Activated CD4-positive, alpha-beta T cell treated with anti-CD3 and anti-CD28 coated beads, Interleukin-2, amount 10 ng/mL, durations not matched to agents 24 days and 14 days (primary cell): ENCODE measurements at regions of chr7 and their contacts with region 1.

Region 1: DNA sequence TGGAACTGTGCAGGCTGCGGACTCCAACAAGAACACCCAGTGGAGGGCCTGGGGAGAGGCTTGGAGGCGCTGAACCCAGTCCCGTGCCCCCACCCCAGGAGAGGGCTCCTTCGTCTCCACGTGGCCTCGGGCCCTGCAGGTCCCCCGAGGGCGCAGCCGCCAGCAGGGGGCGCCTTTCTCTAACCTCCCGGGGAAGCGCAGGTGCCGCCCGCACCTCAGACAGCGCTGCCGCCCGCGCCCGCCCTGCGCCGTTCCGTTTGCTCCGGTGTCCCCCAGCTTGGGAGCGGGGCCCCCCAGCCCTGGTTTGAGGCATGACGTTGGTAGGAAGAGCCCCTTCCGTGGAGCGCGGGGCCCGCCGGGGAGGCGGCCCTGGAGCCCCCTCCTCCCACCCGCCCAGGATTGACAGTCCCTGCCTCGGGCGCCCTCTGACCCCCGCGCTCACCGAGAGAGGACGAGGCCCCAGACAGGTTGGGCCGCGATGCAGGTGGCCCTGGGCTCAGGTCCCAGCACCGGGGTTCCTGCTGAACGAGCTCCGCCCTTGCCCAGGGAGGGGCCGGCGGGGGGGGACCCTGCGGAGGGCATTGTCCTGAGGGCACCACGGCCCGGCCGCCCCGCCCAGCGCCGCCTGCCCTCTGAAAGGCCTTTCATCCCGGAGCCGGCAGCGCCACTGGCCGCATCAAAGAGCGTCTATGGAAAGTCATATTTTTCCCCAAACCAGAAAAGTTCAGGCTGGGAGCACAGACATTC is 42.8 kb downstream of the FOXL3 start:
- DNase-seq: peak; percentile 95
- H3K4me3 Mint-ChIP-seq: no peak overlapping the region
- H3K27ac Mint-ChIP-seq: no peak overlapping the region
- H3K4me1 Mint-ChIP-seq: peaks cover 4% of the 10 kb centered on the region
- H3K27me3 Mint-ChIP-seq: peaks cover 3% of the 10 kb centered on the region

Region 2: DNA sequence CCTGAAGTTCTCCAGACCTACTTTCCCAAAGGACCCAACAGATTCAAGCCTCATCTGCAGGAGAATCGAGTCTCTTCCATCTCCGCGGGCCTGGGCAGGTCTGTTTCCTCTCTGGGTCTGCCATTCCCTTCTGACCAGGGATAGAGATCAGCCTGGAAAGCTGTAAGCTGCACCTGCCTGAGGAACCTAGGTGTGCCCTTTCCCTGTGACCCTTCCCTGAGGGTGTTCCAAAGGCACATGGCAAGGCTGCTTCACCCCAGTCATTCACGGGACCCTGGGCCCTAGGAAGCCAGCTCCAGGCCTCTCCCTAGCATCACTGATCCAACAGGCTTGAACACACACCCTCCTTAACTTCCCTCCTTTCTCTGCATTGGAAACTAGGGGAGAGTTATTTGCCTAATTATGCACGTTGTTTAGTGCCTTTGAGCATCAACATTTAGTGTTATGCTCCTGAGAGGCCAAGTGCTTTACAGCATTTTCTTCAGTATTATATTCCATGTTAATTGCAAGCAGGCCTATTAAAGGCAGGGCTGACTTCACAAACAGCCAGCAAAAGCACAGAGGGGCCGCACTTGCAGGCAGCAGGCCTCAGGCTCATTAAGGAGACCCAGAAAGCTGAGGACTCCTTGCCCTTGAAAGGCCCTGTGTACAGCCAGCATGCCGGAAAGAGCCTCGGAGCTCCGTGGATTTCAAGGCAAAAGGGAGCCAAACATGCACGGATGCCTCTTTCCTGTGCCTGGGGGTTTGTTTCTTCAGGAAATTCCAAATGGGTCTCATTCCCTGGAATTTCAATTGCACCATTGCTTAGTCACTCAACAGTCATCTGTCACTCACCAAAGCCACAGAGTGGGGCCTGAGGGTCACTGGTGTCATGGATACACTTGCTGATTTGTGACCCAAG is 231.4 kb before region 1 on chr7:
- intact Hi-C with region 1: no loop called
- DNase-seq: no peak
- H3K4me3 Mint-ChIP-seq: no peak overlapping the region
- H3K27ac Mint-ChIP-seq: no peak overlapping the region
- H3K4me1 Mint-ChIP-seq: peaks cover 5% of the 10 kb centered on the region
- H3K27me3 Mint-ChIP-seq: peaks cover 8% of the 10 kb centered on the region

Region 3: GRCh38 chr7:636396-636795 is 303.6 kb after region 1 on chr7:
- intact Hi-C with region 1: loop called (anchors 10 kb)
- DNase-seq: peak; percentile 79
- H3K4me3 Mint-ChIP-seq: no peak overlapping the region
- H3K27ac Mint-ChIP-seq: no peak overlapping the region
- H3K4me1 Mint-ChIP-seq: peaks cover 6% of the 10 kb centered on the region
- H3K27me3 Mint-ChIP-seq: no peaks in the 10 kb centered on the region